Colonic mucosa (tissue), 4 donors: ENCODE measurements at regions of chr17 and their contacts with region 1.

Region 1: GRCh38 chr17:29617125-29617480 is 5.6 kb downstream of the CORO6 start:
- DNase-seq: peak; percentile 92
- H3K4me3 ChIP-seq: peak overlapping the region; percentile 33
- H3K27ac ChIP-seq: no peak overlapping the region
- H3K4me1 ChIP-seq: peaks cover 22% of the 10 kb centered on the region
- H3K27me3 ChIP-seq: peaks cover 4% of the 10 kb centered on the region
- CTCF ChIP-seq: peak; percentile 49

Region 2: GRCh38 chr17:29514792-29515191 is 102.3 kb before region 1 on chr17:
- intact Hi-C with region 1: no loop called
- DNase-seq: no peak
- H3K4me3 ChIP-seq: no peak overlapping the region
- H3K27ac ChIP-seq: no peak overlapping the region
- H3K4me1 ChIP-seq: no peaks in the 10 kb centered on the region
- H3K27me3 ChIP-seq: no peaks in the 10 kb centered on the region
- CTCF ChIP-seq: no peak

Region 3: GRCh38 chr17:29579866-29580771 is 37.0 kb before region 1 on chr17:
- intact Hi-C with region 1: loop called (anchors 5 kb)
- DNase-seq: peak; percentile 88
- H3K4me3 ChIP-seq: no peak overlapping the region
- H3K27ac ChIP-seq: no peak overlapping the region
- H3K4me1 ChIP-seq: peaks cover 2% of the 10 kb centered on the region
- H3K27me3 ChIP-seq: no peaks in the 10 kb centered on the region
- CTCF ChIP-seq: peak; percentile 85